B cell (primary cell): ENCODE measurements at regions of chr2 and their contacts with region 1.

Region 1: GRCh38 chr2:20282916-20283592 is 58.1 kb upstream of the SDC1 start:
- DNase-seq: no peak
- ATAC-seq: no peak
- H3K4me3 ChIP-seq: no peak overlapping the region
- H3K4me3 Mint-ChIP-seq: no peak overlapping the region
- H3K27ac ChIP-seq: no peak overlapping the region
- H3K27ac Mint-ChIP-seq: no peak overlapping the region
- H3K4me1 ChIP-seq: no peaks in the 10 kb centered on the region
- H3K4me1 Mint-ChIP-seq: no peaks in the 10 kb centered on the region
- H3K27me3 ChIP-seq: no peaks in the 10 kb centered on the region
- H3K27me3 Mint-ChIP-seq: no peaks in the 10 kb centered on the region
- CTCF ChIP-seq: no peak

Region 2: DNA sequence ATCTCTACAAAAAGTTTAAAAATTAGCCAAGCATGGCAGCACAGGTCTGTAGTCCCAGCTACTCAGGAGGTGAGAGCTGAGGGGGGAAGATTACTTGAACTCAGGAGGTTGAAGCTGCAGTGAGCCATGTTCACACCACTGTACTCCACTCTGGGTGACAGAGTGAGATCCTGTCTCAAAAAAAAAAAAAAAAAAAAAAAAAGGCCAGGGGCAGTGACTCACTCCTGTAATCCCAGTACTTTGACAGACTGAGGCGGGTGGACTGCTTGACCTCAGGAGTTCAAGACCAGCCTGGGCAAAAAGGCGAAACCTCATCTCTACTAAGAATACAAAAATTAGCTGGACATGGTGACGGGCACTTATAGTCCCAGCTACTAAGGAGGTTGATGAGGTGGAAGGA is 30.6 kb after region 1 on chr2:
- CTCF ChIA-PET with region 1: no interaction called
- POLR2A ChIA-PET with region 1: no interaction called
- intact Hi-C with region 1: loop called (anchors 5 kb)
- DNase-seq: no peak
- ATAC-seq: no peak
- H3K4me3 ChIP-seq: no peak overlapping the region
- H3K4me3 Mint-ChIP-seq: no peak overlapping the region
- H3K27ac ChIP-seq: no peak overlapping the region
- H3K27ac Mint-ChIP-seq: no peak overlapping the region
- H3K4me1 ChIP-seq: peaks cover 0 to 8% of the 10 kb centered on the region in 2 donors
- H3K4me1 Mint-ChIP-seq: peaks cover 10% of the 10 kb centered on the region
- H3K27me3 ChIP-seq: no peaks in the 10 kb centered on the region
- H3K27me3 Mint-ChIP-seq: no peaks in the 10 kb centered on the region
- CTCF ChIP-seq: no peak